HEK293 (cell line): ENCODE measurements at regions of chr15 and their contacts with region 1.

Region 1: DNA sequence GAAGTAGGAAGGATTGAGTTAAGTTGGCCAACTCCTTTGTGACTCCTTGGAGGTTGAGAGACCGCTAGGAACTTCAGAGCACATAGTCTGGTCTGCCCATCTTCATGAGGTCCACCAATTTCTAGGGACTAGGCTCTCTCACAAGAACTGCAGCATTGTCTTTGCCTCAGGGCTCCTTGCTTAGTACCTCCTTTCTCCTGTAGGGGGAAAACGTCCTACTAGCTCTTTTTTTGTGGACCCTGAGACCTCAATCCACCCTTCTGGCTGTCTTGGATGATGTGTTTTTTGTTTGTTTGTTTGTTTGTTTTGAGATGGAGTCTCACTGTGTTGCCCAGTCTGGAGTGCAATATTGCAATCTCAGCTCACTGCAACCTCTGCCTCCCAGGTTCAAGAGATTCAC is 21.6 kb downstream of the REC114 start:
- H3K4me3 ChIP-seq: no peak overlapping the region
- H3K27ac ChIP-seq: no peak overlapping the region
- H3K4me1 ChIP-seq: no peaks in the 10 kb centered on the region
- CTCF ChIP-seq: no peak

Region 2: GRCh38 chr15:73454096-73454495 is 10.5 kb before region 1 on chr15:
- CTCF ChIA-PET with region 1: interaction called, 15 read pairs
- POLR2A ChIA-PET with region 1: no interaction called
- H3K4me3 ChIP-seq: no peak overlapping the region
- H3K27ac ChIP-seq: no peak overlapping the region
- H3K4me1 ChIP-seq: no peaks in the 10 kb centered on the region
- CTCF ChIP-seq: no peak

Region 3: GRCh38 chr15:73474785-73475184 is 10.2 kb after region 1 on chr15:
- CTCF ChIA-PET with region 1: interaction called, 11 read pairs
- POLR2A ChIA-PET with region 1: interaction called, 4 read pairs
- H3K4me3 ChIP-seq: no peak overlapping the region
- H3K27ac ChIP-seq: no peak overlapping the region
- H3K4me1 ChIP-seq: no peaks in the 10 kb centered on the region
- CTCF ChIP-seq: no peak